Common myeloid progenitor, CD34-positive (primary cell): ENCODE measurements at regions of chr5 and their contacts with region 1.

Region 1: GRCh38 chr5:139417214-139417613 is 13.3 kb upstream of the SPATA24 start:
- DNase-seq: peak in 2 of 3 donors; percentile 75 to 84
- H3K4me3 ChIP-seq: peak overlapping the region in 1 of 7 experiments; percentile 38
- H3K27ac ChIP-seq: peak overlapping the region in 1 of 2 experiments; percentile 44
- H3K4me1 ChIP-seq: peaks cover 4 to 49% (median 36%) of the 10 kb centered on the region in 4 experiments
- H3K27me3 ChIP-seq: no peaks in the 10 kb centered on the region

Region 2: DNA sequence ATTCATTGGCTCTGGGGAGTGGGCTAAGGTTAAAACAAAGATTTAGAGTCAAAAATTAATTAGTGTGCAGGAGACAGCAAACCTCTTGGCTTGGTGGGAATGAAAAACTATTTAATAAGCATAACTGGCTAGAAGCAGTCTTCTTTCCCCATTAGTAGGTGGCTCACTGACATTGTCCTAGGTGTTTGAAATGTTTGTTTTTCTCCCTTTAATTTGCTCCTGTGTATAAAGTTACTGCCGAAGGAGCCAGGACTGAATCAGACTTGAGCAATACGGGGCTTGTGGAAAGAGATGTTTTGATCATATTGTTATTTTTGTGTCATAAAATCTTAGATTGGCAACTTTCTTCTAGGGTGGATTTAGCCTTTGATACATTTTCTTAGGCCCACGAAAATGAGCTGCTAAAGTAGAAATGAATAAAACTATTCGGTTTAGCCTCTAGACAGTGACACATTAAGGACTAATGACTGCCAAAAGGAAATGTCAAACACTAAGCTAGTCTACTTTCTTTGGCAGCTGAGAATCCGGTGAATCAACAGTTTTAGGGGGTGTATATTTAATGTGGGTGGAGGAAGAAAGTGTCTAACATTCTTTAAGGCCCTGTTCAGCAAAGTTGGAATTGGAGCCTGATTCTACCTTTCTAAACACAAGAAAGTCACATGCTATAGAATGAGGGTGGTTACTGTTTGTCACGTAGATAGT is 572.3 kb before region 1 on chr5:
- CTCF ChIA-PET with region 1: no interaction called
- POLR2A ChIA-PET with region 1: no interaction called
- DNase-seq: peak in 2 of 3 donors; percentile 16 to 54
- H3K4me3 ChIP-seq: no peak overlapping the region
- H3K27ac ChIP-seq: no peak overlapping the region
- H3K4me1 ChIP-seq: peaks cover 0 to 4% (median 2%) of the 10 kb centered on the region in 4 experiments
- H3K27me3 ChIP-seq: no peaks in the 10 kb centered on the region

Region 3: GRCh38 chr5:139301808-139302499 is 115.3 kb before region 1 on chr5:
- CTCF ChIA-PET with region 1: no interaction called
- POLR2A ChIA-PET with region 1: no interaction called
- DNase-seq: no peak
- H3K4me3 ChIP-seq: no peak overlapping the region
- H3K27ac ChIP-seq: no peak overlapping the region
- H3K4me1 ChIP-seq: peaks cover 17 to 50% (median 18%) of the 10 kb centered on the region in 4 experiments
- H3K27me3 ChIP-seq: no peaks in the 10 kb centered on the region

Region 4: DNA sequence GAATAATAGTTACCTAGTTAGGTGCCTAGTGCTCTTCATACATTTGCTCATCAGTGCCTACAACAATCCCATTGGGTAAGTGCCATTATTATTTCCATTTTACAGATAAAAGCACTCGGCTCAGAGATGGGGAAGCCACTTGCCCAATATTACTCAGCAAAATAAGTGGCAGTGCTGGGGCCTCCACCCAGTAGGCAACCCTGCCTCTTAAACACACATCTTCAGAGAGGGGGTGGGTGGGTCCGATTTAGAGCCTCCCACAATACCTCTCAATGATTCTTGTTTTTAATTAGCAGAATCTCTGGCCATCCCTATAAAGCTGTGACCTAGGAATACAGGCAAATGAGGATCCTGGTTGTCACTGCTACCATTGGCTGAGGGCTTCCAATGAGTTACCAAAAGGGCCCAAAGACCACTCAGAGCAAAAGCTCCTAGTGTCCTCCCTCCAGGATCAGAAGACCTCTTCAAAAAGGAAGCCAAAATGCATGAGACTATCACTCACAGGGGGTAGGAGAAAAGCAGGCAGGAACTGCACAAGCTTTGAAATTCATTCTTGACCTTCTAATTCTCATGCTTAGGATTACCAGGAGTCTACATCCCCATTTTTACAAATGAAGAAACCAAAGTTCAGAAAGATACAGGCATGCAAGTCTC is 107.8 kb after region 1 on chr5:
- CTCF ChIA-PET with region 1: interaction called, 359 read pairs
- POLR2A ChIA-PET with region 1: no interaction called
- DNase-seq: no peak
- H3K4me3 ChIP-seq: no peak overlapping the region
- H3K27ac ChIP-seq: no peak overlapping the region
- H3K4me1 ChIP-seq: peaks cover 0 to 6% (median 0%) of the 10 kb centered on the region in 4 experiments
- H3K27me3 ChIP-seq: no peaks in the 10 kb centered on the region

Region 5: DNA sequence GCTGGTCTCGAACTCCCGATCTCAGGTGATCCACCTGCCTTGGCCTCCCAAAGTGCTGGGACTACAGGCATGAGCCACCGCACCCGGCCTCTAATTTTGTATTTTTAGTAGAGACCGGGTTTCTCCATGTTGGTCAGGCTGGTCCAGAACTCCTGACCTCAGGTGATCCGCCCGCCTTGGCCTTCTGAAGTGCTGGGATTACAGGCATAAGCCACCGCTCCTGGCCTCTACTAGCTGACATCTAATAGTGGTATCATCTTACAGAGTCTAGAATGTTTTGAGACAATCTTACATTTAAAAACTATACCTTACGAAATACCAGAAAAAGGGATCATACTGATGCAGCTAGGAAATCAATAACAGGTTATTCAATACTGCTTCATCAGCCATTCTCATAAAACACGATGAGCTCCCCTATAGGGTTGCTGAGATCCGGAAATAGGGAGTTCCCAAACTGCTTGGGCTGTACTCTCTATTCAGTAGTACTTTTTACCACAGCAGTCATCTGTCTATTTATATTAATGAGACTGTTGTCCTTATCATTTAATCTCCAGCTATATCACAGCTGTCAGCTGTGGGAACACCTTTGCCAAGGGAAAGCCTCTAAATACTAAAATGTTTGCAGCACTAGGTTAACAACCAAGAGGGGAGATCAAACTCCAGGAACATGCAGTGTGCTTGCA is 135.8 kb after region 1 on chr5:
- CTCF ChIA-PET with region 1: no interaction called
- POLR2A ChIA-PET with region 1: no interaction called
- DNase-seq: peak in 2 of 3 donors; percentile 45 to 46
- H3K4me3 ChIP-seq: no peak overlapping the region
- H3K27ac ChIP-seq: no peak overlapping the region
- H3K4me1 ChIP-seq: peaks cover 0 to 18% (median 8%) of the 10 kb centered on the region in 4 experiments
- H3K27me3 ChIP-seq: no peaks in the 10 kb centered on the region